Lower leg skin (tissue), 4 donors: ENCODE measurements at regions of chr21 and their contacts with region 1.

Region 1: GRCh38 chr21:24007592-24007991 is 1599.7 kb downstream of the MRPL39 start:
- DNase-seq: no peak
- H3K4me3 ChIP-seq: no peak overlapping the region
- CTCF ChIP-seq: no peak
- POLR2A ChIP-seq: no peak

Region 2: DNA sequence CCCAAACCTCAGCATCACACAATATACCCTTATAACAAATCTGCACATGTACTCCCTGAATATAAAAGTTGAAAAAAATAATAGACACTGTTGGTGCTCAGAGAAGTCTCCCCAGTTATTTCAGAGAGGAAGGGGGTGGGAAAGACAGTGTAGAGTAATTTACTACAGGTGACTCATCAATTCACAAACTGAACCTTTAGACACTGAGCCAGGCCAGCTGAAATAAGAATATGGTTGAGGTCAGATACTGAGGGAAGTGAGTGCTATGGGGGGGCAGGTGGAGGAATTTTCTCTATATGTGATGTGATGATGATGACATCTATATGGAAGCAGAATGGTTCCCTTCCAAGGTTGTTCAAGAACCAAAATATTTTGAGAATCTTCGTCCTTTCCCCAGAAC is 1549.6 kb after region 1 on chr21:
- intact Hi-C with region 1: loop called (anchors 5 kb)
- DNase-seq: no peak
- H3K4me3 ChIP-seq: no peak overlapping the region
- CTCF ChIP-seq: no peak
- POLR2A ChIP-seq: no peak